ENCODE measurements at regions of chr12 and their contacts with region 1.

Region 1: GRCh38 chr12:25250744-25251730 is at the start of gene KRAS:
- DNase-seq: peak; percentile 83 to 95 (median 90)
- ATAC-seq: peak; percentile 84 to 91
- H3K4me3 Mint-ChIP-seq: peak within 1 kb of the TSS; percentile 91 to 98 (median 94)
- H3K27ac Mint-ChIP-seq: peak within 1 kb of the TSS; percentile 88 to 98 (median 96)
- H3K4me1 Mint-ChIP-seq: peaks cover 17 to 47% (median 44%) of the 10 kb centered on the region in 4 donors
- H3K27me3 Mint-ChIP-seq: no peaks in the 10 kb centered on the region
- polyA plus RNA-seq, gene KRAS: 49.3 to 59.5 (median 53.3) TPM

Region 2: DNA sequence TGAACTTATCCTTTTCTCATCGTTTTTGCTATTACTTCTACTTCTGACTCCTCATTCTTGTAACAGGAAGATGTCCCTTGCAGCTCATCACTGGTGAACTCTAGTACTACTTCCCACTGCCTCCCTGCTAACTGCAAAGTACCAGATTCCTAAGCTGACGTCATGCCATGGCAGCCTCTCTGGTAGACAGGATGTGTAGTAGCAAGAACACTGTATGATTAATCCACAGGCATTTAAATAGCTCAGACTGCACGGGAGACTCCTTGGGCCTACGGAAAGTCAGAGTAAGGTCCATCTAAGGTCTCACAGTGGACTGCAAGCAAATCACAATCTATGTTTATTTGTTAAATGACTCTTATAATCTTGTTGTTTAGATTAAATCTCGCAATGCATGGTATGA is 99.6 kb before region 1 on chr12:
- POLR2A ChIA-PET with region 1: no interaction called
- DNase-seq: no peak
- ATAC-seq: no peak
- H3K4me3 Mint-ChIP-seq: no peak overlapping the region
- H3K27ac Mint-ChIP-seq: peak overlapping the region in 2 of 10 donors; percentile 7 to 22
- H3K4me1 Mint-ChIP-seq: peaks cover 0 to 12% (median 3%) of the 10 kb centered on the region in 4 donors
- H3K27me3 Mint-ChIP-seq: no peaks in the 10 kb centered on the region

Region 3: DNA sequence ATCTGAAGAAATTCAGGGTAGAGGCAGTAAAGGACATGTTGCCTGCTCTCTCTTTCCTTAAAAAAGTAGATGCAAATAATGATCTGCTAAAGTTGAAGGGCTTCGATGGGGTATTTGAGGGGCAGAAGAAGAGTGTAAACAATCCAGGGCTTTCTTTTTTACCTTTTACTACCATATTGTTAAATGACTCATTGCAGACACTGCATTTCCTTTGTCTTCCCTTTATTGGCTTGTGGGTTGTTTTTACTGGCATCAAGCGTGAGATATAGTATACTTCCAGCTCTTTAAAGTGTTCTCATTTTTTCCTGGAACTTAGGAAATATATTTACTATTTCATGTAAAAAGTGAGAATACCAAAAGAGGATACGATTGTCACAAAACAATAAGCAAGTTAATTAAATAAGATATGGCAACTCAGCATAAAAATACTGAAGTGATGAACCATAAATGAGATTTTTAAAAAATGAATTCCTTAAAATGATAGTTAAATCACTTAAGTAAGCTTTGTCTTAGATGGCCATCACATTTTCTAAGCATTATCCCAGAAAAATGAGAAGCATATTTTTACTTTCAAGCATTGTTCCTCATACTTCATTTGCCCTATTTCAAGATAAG is 72.0 kb after region 1 on chr12:
- POLR2A ChIA-PET with region 1: interaction called, 15 read pairs
- DNase-seq: peak in 1 of 10 donors; percentile 5
- ATAC-seq: peak; percentile 48 to 64
- H3K4me3 Mint-ChIP-seq: peak overlapping the region; percentile 67 to 94 (median 83)
- H3K27ac Mint-ChIP-seq: peak overlapping the region; percentile 86 to 99 (median 92)
- H3K4me1 Mint-ChIP-seq: peaks cover 26 to 53% (median 45%) of the 10 kb centered on the region in 4 donors
- H3K27me3 Mint-ChIP-seq: no peaks in the 10 kb centered on the region

Region 4: GRCh38 chr12:25364529-25365339 is 113.7 kb after region 1 on chr12:
- POLR2A ChIA-PET with region 1: interaction called, 18 read pairs
- DNase-seq: no peak
- ATAC-seq: peak; percentile 37 to 61
- H3K4me3 Mint-ChIP-seq: peak overlapping the region in 9 of 10 donors; percentile 3 to 78 (median 31)
- H3K27ac Mint-ChIP-seq: peak overlapping the region in 5 of 10 donors; percentile 6 to 78 (median 65)
- H3K4me1 Mint-ChIP-seq: peaks cover 5 to 14% (median 12%) of the 10 kb centered on the region in 4 donors
- H3K27me3 Mint-ChIP-seq: no peaks in the 10 kb centered on the region

Region 5: DNA sequence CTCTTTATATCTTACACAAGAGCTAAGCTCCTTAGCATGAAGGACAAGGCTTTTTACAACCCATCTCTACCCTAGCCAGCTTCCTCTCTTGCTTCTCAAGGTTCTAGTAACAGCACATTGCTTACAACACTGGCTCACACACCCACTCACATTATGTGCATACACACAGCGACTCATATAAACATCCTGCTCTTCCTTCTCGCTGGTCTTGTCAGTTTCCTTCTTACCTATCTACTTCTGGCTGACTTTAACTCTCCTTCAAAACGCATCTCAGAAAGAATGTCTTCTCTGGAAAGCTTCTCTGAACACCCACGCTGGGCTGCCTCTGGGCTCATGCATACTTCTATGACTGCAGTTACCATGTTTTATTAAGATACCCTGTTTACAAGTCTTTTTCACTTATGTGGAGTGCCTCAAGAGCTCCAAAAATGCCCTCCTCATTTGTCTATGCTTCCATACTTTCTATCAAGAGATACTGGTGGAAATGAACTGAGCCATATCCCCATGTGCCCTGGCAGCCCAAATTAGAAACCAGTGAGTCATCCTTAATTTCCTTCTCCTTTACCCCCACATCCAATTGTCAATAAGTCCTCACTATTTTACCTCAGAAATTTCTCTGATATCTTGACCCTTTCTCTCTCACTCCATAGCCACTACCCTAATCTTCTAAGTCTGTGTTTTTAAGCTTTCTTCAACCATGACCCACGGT is 126.6 kb after region 1 on chr12:
- POLR2A ChIA-PET with region 1: interaction called, 30 read pairs
- DNase-seq: peak in 8 of 10 donors; percentile 17 to 74 (median 48)
- ATAC-seq: peak; percentile 90 to 94
- H3K4me3 Mint-ChIP-seq: peak overlapping the region; percentile 29 to 71 (median 56)
- H3K27ac Mint-ChIP-seq: peak overlapping the region; percentile 86 to 98 (median 93)
- H3K4me1 Mint-ChIP-seq: peaks cover 30 to 44% (median 38%) of the 10 kb centered on the region in 4 donors
- H3K27me3 Mint-ChIP-seq: no peaks in the 10 kb centered on the region